PC-9 (cell line): ENCODE measurements at regions of chr5 and their contacts with region 1.

Region 1: DNA sequence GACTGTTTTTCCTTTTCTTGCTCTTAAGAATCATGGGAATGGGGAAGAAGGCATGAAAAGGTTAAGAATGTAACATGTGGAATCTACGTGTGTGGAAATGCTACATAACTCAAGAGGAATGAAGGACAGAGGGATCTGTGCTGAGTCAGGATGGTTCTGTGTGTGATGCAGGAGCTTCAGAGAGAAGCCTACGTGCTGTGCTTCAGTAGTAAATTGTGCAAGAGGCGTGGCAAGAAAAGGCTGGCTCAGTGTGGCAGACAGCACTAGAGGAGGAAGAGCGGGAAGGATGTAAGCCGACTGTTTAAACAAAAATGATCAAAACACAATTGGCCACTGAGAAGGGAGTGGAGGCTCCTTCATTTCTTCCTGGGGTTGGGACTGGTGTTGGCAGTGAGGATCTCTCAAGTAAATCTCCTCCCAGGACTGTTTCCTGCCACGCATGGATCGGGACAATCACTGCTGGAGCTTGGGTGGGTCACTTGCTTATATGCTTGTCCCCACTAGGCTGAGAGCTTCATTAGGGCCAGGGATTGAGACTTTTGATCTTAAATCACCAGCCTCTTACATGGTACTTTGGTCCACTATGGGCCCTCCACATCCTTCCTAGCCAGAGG is 59.4 kb upstream of the BASP1 start:
- DNase-seq: no peak
- H3K4me3 ChIP-seq: no peak overlapping the region
- H3K27ac ChIP-seq: no peak overlapping the region
- H3K4me1 ChIP-seq: peaks cover 9% of the 10 kb centered on the region
- H3K27me3 ChIP-seq: no peaks in the 10 kb centered on the region
- CTCF ChIP-seq: no peak

Region 2: DNA sequence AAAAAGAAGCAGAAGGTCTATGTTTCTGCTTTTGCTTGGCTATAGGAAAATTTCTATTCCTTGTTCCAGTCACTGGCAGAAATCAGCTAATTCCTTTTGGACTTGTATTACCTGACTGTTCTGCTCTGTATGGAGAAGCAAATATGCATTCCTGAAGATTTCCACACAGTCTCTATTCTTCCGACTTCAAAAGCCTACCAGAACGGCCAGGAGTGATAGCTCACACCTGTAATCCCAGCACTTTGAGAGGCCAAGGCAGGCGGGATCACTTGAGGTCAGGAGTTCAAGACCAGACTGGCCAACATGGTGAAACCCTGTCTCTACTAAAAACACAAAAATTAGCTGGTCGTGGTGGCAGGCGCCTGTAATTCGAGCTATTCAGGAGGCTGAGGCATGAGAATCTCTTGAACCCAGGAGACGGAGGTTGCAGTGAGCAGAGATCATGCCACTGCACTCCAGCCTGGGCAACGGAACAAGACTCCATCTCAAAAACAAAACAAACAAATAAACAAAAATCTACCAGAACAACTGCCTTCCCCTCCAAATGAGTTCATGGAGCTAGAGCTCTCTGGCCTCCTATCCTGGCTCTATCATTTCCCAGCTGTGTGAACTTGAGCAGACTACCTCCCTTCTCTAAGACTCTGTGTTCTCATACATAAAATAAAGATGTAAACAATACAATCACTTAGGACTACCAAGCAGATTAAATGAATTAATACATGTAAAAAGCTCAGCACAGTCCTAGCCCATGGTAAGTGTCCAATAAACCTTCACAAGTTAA is 238.9 kb before region 1 on chr5:
- CTCF ChIA-PET with region 1: no interaction called
- POLR2A ChIA-PET with region 1: interaction called, 23 read pairs
- intact Hi-C with region 1: no loop called
- DNase-seq: peak in 1 of 2 experiments; percentile 54
- H3K4me3 ChIP-seq: no peak overlapping the region
- H3K27ac ChIP-seq: no peak overlapping the region
- H3K4me1 ChIP-seq: peaks cover 45% of the 10 kb centered on the region
- H3K27me3 ChIP-seq: no peaks in the 10 kb centered on the region
- CTCF ChIP-seq: no peak

Region 3: GRCh38 chr5:17046320-17046719 is 111.7 kb before region 1 on chr5:
- CTCF ChIA-PET with region 1: no interaction called
- POLR2A ChIA-PET with region 1: no interaction called
- intact Hi-C with region 1: no loop called
- DNase-seq: no peak
- H3K4me3 ChIP-seq: no peak overlapping the region
- H3K27ac ChIP-seq: no peak overlapping the region
- H3K4me1 ChIP-seq: no peaks in the 10 kb centered on the region
- H3K27me3 ChIP-seq: no peaks in the 10 kb centered on the region
- CTCF ChIP-seq: no peak